Ascending aorta (tissue), 2 donors: ENCODE measurements at regions of chr12 and their contacts with region 1.

Region 1: GRCh38 chr12:15532364-15532977 is 210.2 kb downstream of the PTPRO start:
- DNase-seq: peak in 1 of 2 donors; percentile 76
- H3K4me3 ChIP-seq: no peak overlapping the region
- H3K27ac ChIP-seq: peak overlapping the region; percentile 72 to 87
- H3K4me1 ChIP-seq: peaks cover 0 to 43% of the 10 kb centered on the region in 2 donors
- H3K27me3 ChIP-seq: no peaks in the 10 kb centered on the region
- CTCF ChIP-seq: peak; percentile 61 to 66 (median 65)

Region 2: DNA sequence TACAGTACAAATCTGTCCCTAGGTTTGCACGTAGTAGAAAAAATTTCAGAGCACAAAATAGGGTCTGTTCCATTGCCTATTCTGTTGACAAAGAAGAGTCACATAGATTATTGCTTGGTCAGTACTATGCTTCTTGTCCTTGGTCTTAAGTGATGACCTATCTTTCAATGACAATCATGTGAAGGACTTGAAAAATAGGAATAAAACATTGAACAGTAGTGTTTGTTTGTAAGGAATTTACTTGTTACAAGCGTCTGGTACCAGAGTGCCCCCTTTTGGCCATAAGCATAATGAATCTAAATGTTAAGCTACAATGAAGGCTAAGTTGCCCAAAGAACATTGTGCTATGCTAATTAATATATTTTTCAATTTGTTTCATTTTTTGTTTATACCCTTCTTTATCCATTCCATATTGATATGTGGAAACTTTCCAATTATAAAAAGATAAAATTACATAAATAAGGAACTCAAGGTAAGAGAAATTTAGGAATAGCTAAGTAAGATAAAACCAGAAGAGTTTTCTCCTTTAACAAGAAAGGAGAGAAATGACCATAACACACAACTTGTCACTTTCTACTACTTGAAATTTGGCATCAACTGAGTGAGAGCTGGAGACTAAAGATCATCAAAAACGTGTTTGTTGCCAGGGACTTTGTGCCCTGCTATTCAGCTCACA is 52.0 kb after region 1 on chr12:
- intact Hi-C with region 1: loop called (anchors 1 kb)
- DNase-seq: no peak
- H3K4me3 ChIP-seq: no peak overlapping the region
- H3K27ac ChIP-seq: no peak overlapping the region
- H3K4me1 ChIP-seq: no peaks in the 10 kb centered on the region
- H3K27me3 ChIP-seq: no peaks in the 10 kb centered on the region
- CTCF ChIP-seq: peak; percentile 60 to 77 (median 64)

Region 3: GRCh38 chr12:15629108-15629507 is 96.6 kb after region 1 on chr12:
- intact Hi-C with region 1: loop called (anchors 2 kb)
- DNase-seq: peak; percentile 35 to 94
- H3K4me3 ChIP-seq: peak overlapping the region in 1 of 2 donors; percentile 21
- H3K27ac ChIP-seq: peak overlapping the region; percentile 68 to 95
- H3K4me1 ChIP-seq: peaks cover 12 to 48% of the 10 kb centered on the region in 2 donors
- H3K27me3 ChIP-seq: no peaks in the 10 kb centered on the region
- CTCF ChIP-seq: no peak

Region 4: DNA sequence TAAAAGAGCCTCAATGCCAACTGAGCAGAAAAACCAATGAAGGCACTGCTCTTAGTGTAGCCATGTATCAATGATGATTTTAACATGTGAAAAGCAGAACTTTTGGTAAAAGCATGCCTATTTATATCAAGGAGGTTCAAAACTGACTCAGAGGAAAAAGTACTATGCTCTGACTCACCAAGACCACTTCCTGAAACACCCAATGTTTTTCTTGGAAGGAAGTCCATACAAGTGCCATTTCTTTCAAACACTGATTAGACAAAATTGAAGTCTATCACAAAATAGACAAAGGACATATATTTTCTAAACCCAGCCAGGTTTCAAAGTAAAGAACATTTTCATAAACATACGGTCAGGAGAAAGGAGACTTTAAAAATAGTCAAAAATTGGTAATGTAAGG is 168.1 kb after region 1 on chr12:
- intact Hi-C with region 1: loop called (anchors 10 kb)
- DNase-seq: no peak
- H3K4me3 ChIP-seq: no peak overlapping the region
- H3K27ac ChIP-seq: peak overlapping the region; percentile 87 to 90
- H3K4me1 ChIP-seq: peaks cover 9 to 68% of the 10 kb centered on the region in 2 donors
- H3K27me3 ChIP-seq: no peaks in the 10 kb centered on the region
- CTCF ChIP-seq: no peak

Region 5: GRCh38 chr12:15856097-15856982 is 323.9 kb after region 1 on chr12:
- intact Hi-C with region 1: loop called (anchors 5 kb)
- DNase-seq: peak in 1 of 2 donors; percentile 77
- H3K4me3 ChIP-seq: no peak overlapping the region
- H3K27ac ChIP-seq: no peak overlapping the region
- H3K4me1 ChIP-seq: peaks cover 0 to 3% of the 10 kb centered on the region in 2 donors
- H3K27me3 ChIP-seq: no peaks in the 10 kb centered on the region
- CTCF ChIP-seq: peak; percentile 71 to 84 (median 80)